ENCODE measurements at regions of chr22 and their contacts with region 1.

Region 1: DNA sequence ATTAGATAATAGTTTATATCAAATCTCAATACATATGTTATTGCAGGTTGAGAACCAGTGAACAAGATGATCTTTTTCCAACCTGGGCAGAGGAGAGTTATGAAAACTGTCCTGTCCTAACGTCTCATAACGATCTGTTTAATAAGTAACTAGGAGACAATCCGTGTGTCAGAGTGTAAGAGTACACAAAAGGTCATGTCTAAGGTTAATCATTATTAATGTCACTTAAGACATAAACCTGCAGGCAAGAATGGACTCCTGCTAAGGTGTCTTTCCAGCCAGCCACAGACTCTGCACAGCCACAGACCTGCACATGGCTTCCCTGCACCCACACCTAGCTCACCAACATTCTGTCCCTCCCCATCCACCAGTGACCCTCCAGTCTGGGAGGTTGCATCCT is 10.1 kb downstream of the SLC5A4 start:
- DNase-seq: no peak
- ATAC-seq: no peak
- H3K4me3 ChIP-seq: no peak overlapping the region
- H3K27ac ChIP-seq: no peak overlapping the region
- H3K4me1 ChIP-seq: no peaks in the 10 kb centered on the region
- H3K27me3 ChIP-seq: no peaks in the 10 kb centered on the region
- CTCF ChIP-seq: no peak
- POLR2A ChIP-seq: no peak
- RAD21 ChIP-seq: no peak

Region 2: GRCh38 chr22:32005453-32005852 is 239.6 kb before region 1 on chr22:
- CTCF ChIA-PET with region 1: no interaction called
- POLR2A ChIA-PET with region 1: no interaction called
- dilution Hi-C with region 1: no loop called
- in situ Hi-C with region 1: loop called (anchors 10 kb)
- intact Hi-C with region 1: no loop called
- DNase-seq: peak; percentile 25
- ATAC-seq: peak; percentile 32; the same call in 1 of the 2 replicates
- H3K4me3 ChIP-seq: no peak overlapping the region
- H3K27ac ChIP-seq: no peak overlapping the region
- H3K4me1 ChIP-seq: no peaks in the 10 kb centered on the region
- H3K27me3 ChIP-seq: no peaks in the 10 kb centered on the region; the same call in none of the 2 replicates
- CTCF ChIP-seq: no peak
- POLR2A ChIP-seq: no peak
- RAD21 ChIP-seq: no peak